ENCODE measurements at regions of chr11 and their contacts with region 1.

Region 1: DNA sequence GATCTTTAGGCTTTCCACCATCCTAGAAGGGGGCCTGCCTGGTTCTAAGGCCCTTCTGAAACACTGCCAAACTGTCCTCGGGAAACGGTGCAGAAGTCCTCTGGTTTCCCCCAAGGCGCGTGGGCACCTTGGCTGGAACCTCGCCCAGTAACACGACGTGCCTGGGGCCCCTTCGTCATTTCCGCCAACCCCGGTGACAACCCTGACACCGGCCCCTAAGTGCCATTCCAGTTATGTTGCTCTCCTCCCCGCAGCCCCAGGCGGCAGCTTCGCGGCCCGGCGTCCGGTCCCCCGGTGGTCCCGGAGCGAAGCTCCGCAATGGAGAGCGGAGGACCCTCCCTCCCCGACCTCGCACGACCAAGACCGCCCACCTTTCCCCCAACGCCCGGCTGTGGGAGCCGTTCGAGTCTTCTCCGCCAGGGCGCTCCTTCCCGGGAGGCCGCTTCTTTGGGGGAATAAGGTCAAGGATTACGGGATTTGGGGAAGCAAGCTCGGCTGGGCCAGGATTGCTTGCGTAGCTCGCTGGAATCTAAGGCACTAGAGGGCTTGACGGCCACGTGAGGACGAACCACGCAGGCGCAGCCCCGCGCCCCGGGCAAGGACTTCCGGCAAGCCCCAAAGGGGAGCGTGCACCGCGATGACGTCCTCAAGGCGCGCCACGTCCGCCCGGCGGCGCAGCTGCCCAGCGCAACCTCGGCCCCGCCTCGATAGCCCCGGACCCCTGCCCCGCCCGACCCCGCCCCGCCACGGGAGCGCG is 626 bp downstream of the RNH1 start:
- DNase-seq: peak; percentile 76 to 98
- H3K4me3 ChIP-seq: peak overlapping the region; percentile 83 to 85
- H3K27ac ChIP-seq: peak overlapping the region; percentile 99 to 100
- H3K4me1 ChIP-seq: peaks cover 15 to 37% of the 10 kb centered on the region in 2 donors
- H3K27me3 ChIP-seq: no peaks in the 10 kb centered on the region
- CTCF ChIP-seq: peak in 2 of 3 experiments; percentile 8 to 23

Region 2: GRCh38 chr11:236774-237767 is 269.3 kb before region 1 on chr11 and contains the start of gene PSMD13:
- intact Hi-C with region 1: loop called (anchors 2 kb)
- DNase-seq: peak; percentile 32 to 92
- H3K4me3 ChIP-seq: peak within 1 kb of the TSS; percentile 96 to 99
- H3K27ac ChIP-seq: peak within 1 kb of the TSS; percentile 98
- H3K4me1 ChIP-seq: peaks cover 8 to 15% of the 10 kb centered on the region in 2 donors
- H3K27me3 ChIP-seq: no peaks in the 10 kb centered on the region
- CTCF ChIP-seq: no peak
- total RNA-seq, gene PSMD13: 50.2 TPM

Region 3: DNA sequence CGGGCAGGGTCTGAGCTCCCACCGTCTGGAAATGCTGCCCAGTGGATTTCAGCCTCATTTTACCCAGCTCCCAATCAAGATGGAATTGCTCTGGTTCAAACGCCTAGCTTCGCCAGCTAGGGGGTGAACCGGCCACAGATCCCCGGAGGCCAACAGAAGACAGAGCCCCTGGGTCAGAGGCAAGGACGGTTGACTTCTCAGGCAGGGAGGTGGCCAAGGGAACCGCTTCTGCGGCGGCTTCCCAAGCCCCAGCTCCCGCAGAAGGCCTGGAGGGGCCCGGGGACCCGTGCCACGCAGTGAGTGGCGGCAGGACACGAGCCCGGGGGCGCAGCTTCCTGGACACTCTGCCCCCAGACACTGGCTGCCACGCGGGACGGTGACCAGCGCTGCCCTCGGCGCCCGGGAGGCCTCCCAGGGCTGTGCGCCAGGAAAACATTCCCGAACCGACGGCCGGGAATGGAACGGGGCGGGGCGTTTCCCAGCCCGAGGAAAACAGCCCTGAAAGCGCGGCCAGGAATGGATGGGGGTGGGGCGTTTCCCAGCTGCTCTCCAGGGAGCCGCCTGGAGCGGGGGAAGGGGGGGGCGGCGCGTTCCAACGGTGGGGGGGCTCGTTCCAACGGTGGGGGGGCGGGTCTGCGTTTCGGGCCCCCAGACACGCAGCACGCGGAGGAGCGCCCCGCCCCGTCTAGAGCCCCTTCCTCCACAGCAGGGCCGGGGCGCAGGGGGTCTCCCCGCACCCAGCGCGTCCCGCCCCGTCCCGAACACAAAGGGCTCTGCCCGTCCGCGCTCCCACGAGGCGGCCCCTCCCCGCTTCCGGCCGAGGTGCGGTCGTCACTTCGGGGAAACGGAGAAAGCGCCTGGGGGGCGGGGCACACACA is 150.6 kb before region 1 on chr11:
- intact Hi-C with region 1: loop called (anchors 1 kb)
- DNase-seq: peak; percentile 79 to 96
- H3K4me3 ChIP-seq: peak overlapping the region; percentile 38 to 54
- H3K27ac ChIP-seq: peak overlapping the region; percentile 92 to 98
- H3K4me1 ChIP-seq: peaks cover 26 to 31% of the 10 kb centered on the region in 2 donors
- H3K27me3 ChIP-seq: no peaks in the 10 kb centered on the region
- CTCF ChIP-seq: no peak

Region 4: GRCh38 chr11:416757-417621 is 89.4 kb before region 1 on chr11:
- intact Hi-C with region 1: no loop called
- DNase-seq: peak in 1 of 2 donors; percentile 7
- H3K4me3 ChIP-seq: peak overlapping the region; percentile 38 to 51
- H3K27ac ChIP-seq: peak overlapping the region; percentile 16 to 60
- H3K4me1 ChIP-seq: no peaks in the 10 kb centered on the region
- H3K27me3 ChIP-seq: peaks cover 8% of the 10 kb centered on the region
- CTCF ChIP-seq: no peak

Region 5: DNA sequence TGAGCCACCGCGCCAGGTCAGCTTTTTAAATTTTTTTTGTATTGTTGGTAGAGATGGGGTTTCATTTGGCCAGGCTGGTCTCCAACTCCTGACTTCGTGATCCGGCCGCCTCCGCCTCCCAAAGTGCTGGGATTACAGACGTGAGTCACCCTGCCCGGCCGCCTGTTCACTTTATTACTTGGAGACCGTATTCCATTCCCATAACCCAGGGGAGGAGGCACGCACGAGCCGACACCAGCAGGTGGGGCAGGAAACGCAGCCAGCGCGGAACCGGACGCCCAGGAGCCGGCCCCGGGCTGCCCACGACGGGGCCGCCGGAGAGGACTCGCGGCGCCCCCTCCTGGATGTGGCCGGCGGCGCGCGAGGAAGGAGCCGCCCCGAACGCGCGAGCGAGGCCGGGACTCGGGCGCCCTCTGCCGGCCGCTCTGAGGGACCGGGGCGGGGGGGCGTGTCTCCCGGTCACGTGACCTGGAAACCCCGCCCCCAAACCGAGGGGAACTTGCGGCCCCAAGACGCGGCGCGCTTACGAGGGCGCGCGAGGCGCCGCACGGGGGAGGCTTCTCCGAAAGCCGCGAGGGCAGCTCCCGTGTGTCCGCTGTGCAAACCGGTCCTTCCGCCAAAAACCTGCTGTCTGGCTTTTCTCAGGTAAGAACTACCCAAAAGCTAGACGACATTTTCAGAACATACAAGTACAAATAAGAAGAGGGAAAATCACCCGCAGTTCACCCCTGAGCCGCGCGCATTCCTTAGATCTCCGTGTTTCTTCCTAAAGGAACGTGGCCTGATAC is 12.2 kb after region 1 on chr11:
- intact Hi-C with region 1: loop called (anchors 1 kb)
- DNase-seq: peak; percentile 81 to 96
- H3K4me3 ChIP-seq: peak overlapping the region; percentile 11 to 54
- H3K27ac ChIP-seq: peak overlapping the region; percentile 76 to 80
- H3K4me1 ChIP-seq: peaks cover 2 to 3% of the 10 kb centered on the region in 2 donors
- H3K27me3 ChIP-seq: no peaks in the 10 kb centered on the region
- CTCF ChIP-seq: peak; percentile 84 to 100 (median 96)

Region 6: GRCh38 chr11:575996-576768 is 69.8 kb after region 1 on chr11 and contains the start of gene PHRF1:
- intact Hi-C with region 1: loop called (anchors 2 kb)
- DNase-seq: peak; percentile 72 to 96
- H3K4me3 ChIP-seq: peak within 1 kb of the TSS; percentile 81 to 91
- H3K27ac ChIP-seq: peak within 1 kb of the TSS; percentile 90 to 91
- H3K4me1 ChIP-seq: peaks cover 11 to 38% of the 10 kb centered on the region in 2 donors
- H3K27me3 ChIP-seq: no peaks in the 10 kb centered on the region
- CTCF ChIP-seq: no peak
- total RNA-seq, gene PHRF1: 25.4 TPM

Measured in ascending aorta (tissue), 2 donors.